Activated CD4-positive, alpha-beta memory T cell treated with anti-CD3 and anti-CD28 coated beads for 36 hours (primary cell): ENCODE measurements at regions of chr11 and their contacts with region 1.

Region 1: GRCh38 chr11:96342961-96343711 is at the start of gene MAML2:
- DNase-seq: peak; percentile 96
- H3K4me3 Mint-ChIP-seq: peak within 1 kb of the TSS; percentile 86
- H3K27ac Mint-ChIP-seq: peak within 1 kb of the TSS; percentile 95
- H3K4me1 Mint-ChIP-seq: peaks cover 26% of the 10 kb centered on the region
- H3K27me3 Mint-ChIP-seq: no peaks in the 10 kb centered on the region
- total RNA-seq, gene MAML2: 24.2 TPM

Region 2: GRCh38 chr11:95790123-95790932 is 552.8 kb before region 1 on chr11 and contains the start of gene CEP57:
- CTCF ChIA-PET with region 1: interaction called, 4 read pairs
- POLR2A ChIA-PET with region 1: interaction called, 17 read pairs
- intact Hi-C with region 1: loop called (anchors 1 kb)
- DNase-seq: peak; percentile 97
- H3K4me3 Mint-ChIP-seq: peak within 1 kb of the TSS; percentile 95
- H3K27ac Mint-ChIP-seq: peak within 1 kb of the TSS; percentile 100
- H3K4me1 Mint-ChIP-seq: peaks cover 55% of the 10 kb centered on the region
- H3K27me3 Mint-ChIP-seq: no peaks in the 10 kb centered on the region
- total RNA-seq, gene CEP57: 115 to 117 TPM

Region 3: DNA sequence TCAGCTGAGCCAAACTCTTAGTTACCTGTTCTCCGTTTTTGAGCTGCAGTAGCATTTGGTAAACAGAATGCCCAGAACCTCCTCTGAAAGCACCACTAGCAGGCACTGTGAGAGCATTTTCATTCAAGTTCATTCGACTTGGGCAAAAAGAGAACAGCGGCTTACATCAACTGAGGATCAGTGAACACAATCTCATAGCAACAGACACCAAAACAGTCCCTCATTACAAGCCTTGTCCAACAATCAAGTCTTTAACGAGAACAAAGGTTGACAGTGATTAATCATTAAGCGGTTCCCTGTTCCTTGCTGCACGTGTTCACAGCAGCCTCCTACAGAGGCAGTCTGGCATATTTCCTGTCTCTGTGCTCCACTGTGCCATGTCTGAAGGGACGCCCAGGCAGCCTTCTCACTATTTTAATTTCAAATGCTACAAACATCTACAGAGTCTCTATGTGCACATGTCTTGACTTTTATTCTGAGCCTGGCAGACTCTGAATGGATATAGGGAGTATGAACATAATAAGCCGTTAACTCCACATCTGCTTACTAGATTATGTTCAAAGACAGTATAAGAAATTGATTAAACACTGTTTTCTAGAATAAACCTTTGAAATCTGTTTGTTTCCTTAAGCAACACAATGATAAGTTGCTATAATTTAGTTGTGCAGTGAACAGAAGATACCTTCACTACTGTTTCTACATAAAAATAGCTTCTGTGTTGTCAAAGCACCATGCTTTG is 330.9 kb before region 1 on chr11:
- CTCF ChIA-PET with region 1: interaction called, 20 read pairs
- POLR2A ChIA-PET with region 1: no interaction called
- intact Hi-C with region 1: loop called (anchors 1 kb)
- DNase-seq: peak; percentile 59
- H3K4me3 Mint-ChIP-seq: peak overlapping the region; percentile 32
- H3K27ac Mint-ChIP-seq: peak overlapping the region; percentile 75
- H3K4me1 Mint-ChIP-seq: peaks cover 55% of the 10 kb centered on the region
- H3K27me3 Mint-ChIP-seq: no peaks in the 10 kb centered on the region

Region 4: DNA sequence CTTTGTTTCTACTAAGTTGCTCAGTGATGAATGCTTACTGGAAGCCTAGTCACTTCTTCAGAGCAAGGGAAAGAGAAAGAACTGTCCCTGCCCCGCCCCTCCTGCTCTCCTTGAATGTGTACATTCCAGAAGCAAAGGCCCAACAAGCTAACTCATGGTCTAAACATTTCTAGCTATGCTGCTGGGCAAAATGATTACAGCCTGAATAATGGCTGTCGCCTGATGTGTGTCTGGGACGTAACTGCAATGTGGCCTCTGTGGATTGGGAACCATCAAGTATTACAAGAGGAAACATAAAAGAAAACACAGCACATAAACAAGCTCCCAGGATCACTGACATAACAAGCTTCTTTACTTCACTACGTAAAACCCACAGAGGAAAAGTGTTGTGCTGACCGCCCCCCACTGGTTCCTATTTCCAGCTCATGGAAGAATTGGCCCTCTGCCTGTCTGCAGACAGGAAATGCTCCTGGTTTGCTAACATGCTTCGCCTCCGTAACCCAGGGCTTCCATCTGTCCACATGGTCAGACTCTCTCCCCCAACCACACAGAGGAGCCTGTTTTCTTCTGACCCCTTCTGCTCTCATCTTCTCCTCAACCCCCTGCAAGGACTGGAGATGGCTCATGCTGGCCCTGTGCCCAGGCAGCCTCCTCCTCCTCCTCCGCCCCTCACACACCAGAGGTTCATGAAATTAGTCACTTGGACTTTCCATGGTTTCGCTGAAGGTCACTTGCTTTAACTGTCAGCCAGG is 187.3 kb before region 1 on chr11:
- CTCF ChIA-PET with region 1: interaction called, 13 read pairs
- POLR2A ChIA-PET with region 1: interaction called, 4 read pairs
- intact Hi-C with region 1: loop called (anchors 1 kb)
- DNase-seq: peak; percentile 88
- H3K4me3 Mint-ChIP-seq: peak overlapping the region; percentile 42
- H3K27ac Mint-ChIP-seq: peak overlapping the region; percentile 95
- H3K4me1 Mint-ChIP-seq: peaks cover 61% of the 10 kb centered on the region
- H3K27me3 Mint-ChIP-seq: no peaks in the 10 kb centered on the region

Region 5: DNA sequence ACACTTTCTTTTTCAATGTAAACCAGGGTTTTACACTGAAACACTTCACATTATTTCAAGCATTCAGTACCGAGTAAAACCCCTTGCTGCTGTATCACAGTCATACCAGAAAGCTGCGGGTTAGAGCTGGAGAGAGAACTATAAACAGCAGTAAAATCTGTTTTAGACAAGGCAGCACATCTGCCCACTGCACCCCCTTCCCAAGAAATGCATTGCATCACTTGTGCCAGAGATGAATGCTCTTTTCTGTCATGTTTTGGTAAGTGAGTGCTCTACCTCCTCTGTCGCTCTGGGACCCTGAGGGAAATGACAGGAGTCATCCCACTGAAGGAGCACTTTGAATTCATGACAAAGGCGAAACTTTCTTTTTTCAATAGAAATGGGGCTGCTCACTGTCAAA is 107.4 kb before region 1 on chr11:
- CTCF ChIA-PET with region 1: interaction called, 93 read pairs
- POLR2A ChIA-PET with region 1: interaction called, 18 read pairs
- intact Hi-C with region 1: loop called (anchors 1 kb)
- DNase-seq: peak; percentile 90
- H3K4me3 Mint-ChIP-seq: peak overlapping the region; percentile 58
- H3K27ac Mint-ChIP-seq: peak overlapping the region; percentile 94
- H3K4me1 Mint-ChIP-seq: peaks cover 50% of the 10 kb centered on the region
- H3K27me3 Mint-ChIP-seq: no peaks in the 10 kb centered on the region

Region 6: GRCh38 chr11:96287822-96288439 is 55.2 kb before region 1 on chr11:
- CTCF ChIA-PET with region 1: interaction called, 16 read pairs
- POLR2A ChIA-PET with region 1: interaction called, 3 read pairs
- intact Hi-C with region 1: loop called (anchors 2 kb)
- DNase-seq: no peak
- H3K4me3 Mint-ChIP-seq: no peak overlapping the region
- H3K27ac Mint-ChIP-seq: peak overlapping the region; percentile 31
- H3K4me1 Mint-ChIP-seq: peaks cover 79% of the 10 kb centered on the region
- H3K27me3 Mint-ChIP-seq: no peaks in the 10 kb centered on the region

Region 7: DNA sequence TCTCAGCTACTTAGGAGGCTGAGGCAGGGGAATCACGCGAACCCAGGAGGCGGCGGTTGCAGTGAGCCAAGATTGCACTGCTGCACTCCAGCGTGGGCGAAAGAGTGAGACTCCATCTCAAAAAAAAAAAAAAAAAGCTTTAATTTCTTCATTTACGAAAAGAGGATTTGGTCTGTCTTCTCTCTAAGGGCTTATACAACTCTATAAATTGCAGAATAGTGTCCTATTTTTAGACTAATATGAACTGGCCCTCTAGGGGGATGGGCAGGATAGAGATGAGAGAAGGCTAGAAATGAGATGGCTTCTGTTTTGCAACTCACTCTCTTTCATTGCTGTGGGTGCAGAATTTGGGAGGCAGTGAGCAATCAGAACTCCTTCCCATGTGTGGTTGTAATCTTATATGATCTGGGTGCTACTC is 11.4 kb before region 1 on chr11:
- CTCF ChIA-PET with region 1: interaction called, 9 read pairs
- POLR2A ChIA-PET with region 1: interaction called, 13 read pairs
- intact Hi-C with region 1: loop called (anchors 1 kb)
- DNase-seq: no peak
- H3K4me3 Mint-ChIP-seq: no peak overlapping the region
- H3K27ac Mint-ChIP-seq: no peak overlapping the region
- H3K4me1 Mint-ChIP-seq: peaks cover 79% of the 10 kb centered on the region
- H3K27me3 Mint-ChIP-seq: no peaks in the 10 kb centered on the region

Region 8: DNA sequence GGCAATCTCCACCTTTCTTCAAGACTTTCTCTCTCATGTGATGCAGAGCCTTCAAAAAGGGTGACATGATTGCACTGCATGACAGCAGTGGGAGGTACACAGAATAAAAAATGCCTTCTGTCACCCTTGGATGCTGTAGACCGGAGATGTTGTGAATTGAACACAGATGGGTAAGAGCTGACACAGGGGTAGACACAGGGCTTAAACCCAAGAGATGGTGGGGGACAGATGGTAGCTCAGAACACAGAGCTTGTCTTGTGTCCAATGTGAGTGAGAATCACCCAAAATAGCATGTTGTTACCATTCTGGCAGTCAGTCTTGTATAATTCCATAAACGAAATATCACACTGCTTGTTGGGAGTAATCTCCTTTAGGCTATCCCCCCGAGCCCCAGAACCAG is 116.6 kb after region 1 on chr11:
- CTCF ChIA-PET with region 1: no interaction called
- POLR2A ChIA-PET with region 1: no interaction called
- intact Hi-C with region 1: no loop called
- DNase-seq: no peak
- H3K4me3 Mint-ChIP-seq: no peak overlapping the region
- H3K27ac Mint-ChIP-seq: no peak overlapping the region
- H3K4me1 Mint-ChIP-seq: peaks cover 9% of the 10 kb centered on the region
- H3K27me3 Mint-ChIP-seq: peaks cover 14% of the 10 kb centered on the region